IMR-90 (cell line): ENCODE measurements at regions of chrX and their contacts with region 1.

Region 1: DNA sequence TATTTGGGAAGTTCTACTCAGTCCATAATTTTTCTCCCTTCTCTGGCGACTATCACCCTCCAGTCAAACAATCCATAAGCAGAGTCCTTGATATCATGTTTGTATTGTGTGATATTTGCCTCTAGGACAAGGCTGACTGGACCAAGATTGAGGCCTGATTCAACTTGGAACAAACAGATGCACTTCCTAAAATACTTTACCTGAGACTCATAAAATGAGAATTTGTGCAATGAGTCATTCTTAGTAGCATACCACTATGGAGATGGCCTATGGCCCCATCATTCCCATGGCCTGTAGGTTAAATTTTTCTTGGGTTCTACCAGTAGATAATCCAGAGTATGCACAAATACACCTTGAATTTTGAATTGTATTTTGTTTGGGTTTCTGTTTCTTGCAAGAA is 74.2 kb upstream of the DMD start:
- DNase-seq: no peak
- ATAC-seq: no peak
- H3K4me3 ChIP-seq: no peak overlapping the region
- H3K27ac ChIP-seq: no peak overlapping the region
- H3K4me1 ChIP-seq: no peaks in the 10 kb centered on the region
- H3K27me3 ChIP-seq: no peaks in the 10 kb centered on the region
- CTCF ChIP-seq: no peak
- POLR2A ChIP-seq: no peak
- RAD21 ChIP-seq: no peak

Region 2: DNA sequence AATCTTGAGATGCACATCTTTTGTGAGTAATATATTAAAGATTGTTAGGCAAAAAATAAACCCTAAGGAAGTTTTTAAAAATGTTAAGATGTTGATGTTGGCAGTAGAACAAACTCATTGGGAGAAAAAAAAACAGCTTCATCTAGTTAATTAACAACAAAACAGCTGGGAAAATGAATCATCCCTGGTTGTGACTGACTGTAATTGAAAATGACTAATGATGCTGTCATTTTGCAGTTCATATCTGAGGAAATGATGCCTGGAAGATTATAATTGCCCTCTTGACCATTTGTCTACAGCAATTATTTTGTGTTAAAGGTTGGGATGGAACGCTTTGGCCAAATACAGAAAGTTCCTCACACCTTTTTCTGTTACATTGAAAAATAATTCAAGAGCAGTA is 1453.3 kb before region 1 on chrX:
- CTCF ChIA-PET with region 1: interaction called, 10 read pairs
- POLR2A ChIA-PET with region 1: no interaction called
- dilution Hi-C with region 1: no loop called
- in situ Hi-C with region 1: no loop called
- intact Hi-C with region 1: no loop called
- DNase-seq: no peak
- ATAC-seq: no peak
- H3K4me3 ChIP-seq: no peak overlapping the region
- H3K27ac ChIP-seq: no peak overlapping the region
- H3K4me1 ChIP-seq: no peaks in the 10 kb centered on the region
- H3K27me3 ChIP-seq: no peaks in the 10 kb centered on the region
- CTCF ChIP-seq: no peak
- POLR2A ChIP-seq: no peak
- RAD21 ChIP-seq: no peak

Region 3: DNA sequence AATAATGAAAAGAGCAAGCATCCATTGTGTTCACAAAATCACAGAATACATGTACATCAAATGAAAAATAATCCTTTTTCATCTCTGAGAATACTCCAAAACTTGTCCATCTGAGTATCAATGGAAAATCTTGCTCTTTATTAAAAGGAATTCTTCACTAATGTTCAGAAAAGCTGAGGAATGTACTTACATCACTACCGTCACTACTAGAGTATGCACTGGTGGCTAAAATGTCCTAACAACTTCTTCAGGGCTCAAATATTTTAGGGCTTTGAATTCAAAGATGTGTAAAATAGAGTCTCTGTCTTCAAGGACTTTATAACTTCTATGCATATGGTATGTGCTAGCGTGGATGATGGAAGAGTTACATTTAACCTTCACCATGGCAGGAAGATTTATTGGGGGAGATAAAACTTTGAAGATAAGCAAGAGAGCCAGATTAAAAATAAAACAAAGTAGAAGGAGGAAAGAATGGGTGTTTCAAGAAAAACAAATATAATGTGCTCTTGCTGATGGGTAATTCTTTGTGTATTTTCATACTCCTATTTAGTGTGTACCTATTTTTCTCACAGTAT is 129.3 kb before region 1 on chrX:
- CTCF ChIA-PET with region 1: no interaction called
- POLR2A ChIA-PET with region 1: no interaction called
- dilution Hi-C with region 1: no loop called
- in situ Hi-C with region 1: no loop called
- intact Hi-C with region 1: no loop called
- DNase-seq: peak; percentile 41
- ATAC-seq: peak; percentile 81
- H3K4me3 ChIP-seq: no peak overlapping the region
- H3K27ac ChIP-seq: no peak overlapping the region
- H3K4me1 ChIP-seq: no peaks in the 10 kb centered on the region
- H3K27me3 ChIP-seq: no peaks in the 10 kb centered on the region
- CTCF ChIP-seq: no peak
- POLR2A ChIP-seq: no peak
- RAD21 ChIP-seq: no peak